CD8-positive, alpha-beta memory T cell (primary cell): ENCODE measurements at regions of chr10 and their contacts with region 1.

Region 1: GRCh38 chr10:100433253-100434240 is 29.3 kb upstream of the WNT8B start:
- DNase-seq: peak; percentile 84 to 94 (median 92)
- H3K4me3 ChIP-seq: no peak overlapping the region
- H3K4me3 Mint-ChIP-seq: no peak overlapping the region
- H3K27ac ChIP-seq: no peak overlapping the region
- H3K27ac Mint-ChIP-seq: no peak overlapping the region
- H3K4me1 ChIP-seq: no peaks in the 10 kb centered on the region
- H3K4me1 Mint-ChIP-seq: peaks cover 0 to 1% (median 0%) of the 10 kb centered on the region in 3 donors
- H3K27me3 ChIP-seq: no peaks in the 10 kb centered on the region
- H3K27me3 Mint-ChIP-seq: peaks cover 0 to 1% of the 10 kb centered on the region in 2 donors

Region 2: GRCh38 chr10:100338434-100339036 is 95.0 kb before region 1 on chr10:
- CTCF ChIA-PET with region 1: interaction called, 85 read pairs
- POLR2A ChIA-PET with region 1: interaction called, 5 read pairs
- DNase-seq: peak; percentile 63 to 80 (median 69)
- H3K4me3 ChIP-seq: no peak overlapping the region
- H3K4me3 Mint-ChIP-seq: no peak overlapping the region
- H3K27ac ChIP-seq: no peak overlapping the region
- H3K27ac Mint-ChIP-seq: peak overlapping the region in 2 of 8 donors; percentile 9 to 32
- H3K4me1 ChIP-seq: no peaks in the 10 kb centered on the region
- H3K4me1 Mint-ChIP-seq: no peaks in the 10 kb centered on the region
- H3K27me3 ChIP-seq: no peaks in the 10 kb centered on the region
- H3K27me3 Mint-ChIP-seq: peaks cover 8 to 18% of the 10 kb centered on the region in 2 donors

Region 3: GRCh38 chr10:100346765-100347567 is 86.6 kb before region 1 on chr10 and contains the start of gene SCD:
- CTCF ChIA-PET with region 1: interaction called, 85 read pairs
- POLR2A ChIA-PET with region 1: no interaction called
- DNase-seq: peak; percentile 66 to 77 (median 77)
- H3K4me3 ChIP-seq: peak within 1 kb of the TSS; percentile 79
- H3K4me3 Mint-ChIP-seq: peak within 1 kb of the TSS; percentile 81 to 95 (median 90)
- H3K27ac ChIP-seq: peak within 1 kb of the TSS; percentile 76
- H3K27ac Mint-ChIP-seq: peak within 1 kb of the TSS; percentile 27 to 87 (median 74)
- H3K4me1 ChIP-seq: peaks cover 12% of the 10 kb centered on the region
- H3K4me1 Mint-ChIP-seq: peaks cover 25 to 34% (median 25%) of the 10 kb centered on the region in 3 donors
- H3K27me3 ChIP-seq: no peaks in the 10 kb centered on the region
- H3K27me3 Mint-ChIP-seq: no peaks in the 10 kb centered on the region
- total RNA-seq, gene SCD: 43.9 to 45.3 TPM

Region 4: GRCh38 chr10:100508691-100509150 is 75.2 kb after region 1 on chr10:
- CTCF ChIA-PET with region 1: interaction called, 24 read pairs
- POLR2A ChIA-PET with region 1: no interaction called
- DNase-seq: peak in 3 of 5 donors; percentile 56 to 73 (median 63)
- H3K4me3 ChIP-seq: no peak overlapping the region
- H3K4me3 Mint-ChIP-seq: peak overlapping the region; percentile 0 to 78 (median 71)
- H3K27ac ChIP-seq: no peak overlapping the region
- H3K27ac Mint-ChIP-seq: peak overlapping the region; percentile 65 to 97 (median 92)
- H3K4me1 ChIP-seq: peaks cover 50% of the 10 kb centered on the region
- H3K4me1 Mint-ChIP-seq: peaks cover 63 to 68% (median 63%) of the 10 kb centered on the region in 3 donors
- H3K27me3 ChIP-seq: no peaks in the 10 kb centered on the region
- H3K27me3 Mint-ChIP-seq: no peaks in the 10 kb centered on the region